Activated CD4-positive, alpha-beta T cell treated with anti-CD3 and anti-CD28 coated beads, Interleukin-2, amount 10 ng/mL, durations not matched to agents 24 days and 14 days (primary cell): ENCODE measurements at regions of chr1 and their contacts with region 1.

Region 1: DNA sequence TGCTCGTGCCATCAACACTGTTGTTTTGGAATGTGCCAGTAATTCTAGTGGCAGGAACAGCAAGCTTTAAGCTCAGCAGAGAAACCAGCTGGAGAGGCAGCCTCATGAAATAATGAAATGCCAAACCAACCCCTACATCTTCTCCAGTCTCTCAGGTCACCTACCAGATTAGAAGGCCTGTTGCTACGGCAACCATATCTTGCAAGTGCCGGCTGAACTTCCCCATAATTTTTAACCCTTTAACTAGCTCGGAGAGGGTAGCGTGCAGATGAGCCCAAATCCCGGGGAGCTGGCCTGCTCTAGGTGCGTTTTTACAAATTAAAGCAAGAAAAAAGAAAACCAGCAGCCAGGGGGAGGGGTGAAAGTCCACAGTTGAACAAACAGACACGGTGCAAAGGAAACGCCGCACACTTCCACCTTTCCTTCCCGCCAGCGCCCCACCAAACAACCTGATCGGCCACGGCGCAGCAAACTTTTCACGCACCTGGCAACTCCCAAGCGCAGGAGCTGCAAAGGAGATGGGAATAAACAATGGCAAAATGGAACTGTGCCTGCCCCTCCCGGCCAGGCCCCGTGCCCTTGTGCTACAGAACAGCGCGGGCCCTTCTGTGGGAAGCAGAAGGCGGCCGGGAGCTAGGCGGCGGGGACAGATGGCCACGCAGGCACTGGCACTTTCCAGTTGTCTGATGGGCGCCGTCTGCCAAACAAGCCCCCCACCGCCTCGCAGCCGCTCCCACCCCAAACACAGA is 50.1 kb downstream of the SSBP3 start:
- DNase-seq: peak; percentile 70
- H3K4me3 Mint-ChIP-seq: peak overlapping the region; percentile 81
- H3K27ac Mint-ChIP-seq: peak overlapping the region; percentile 86
- H3K4me1 Mint-ChIP-seq: peaks cover 78% of the 10 kb centered on the region
- H3K27me3 Mint-ChIP-seq: no peaks in the 10 kb centered on the region

Region 2: DNA sequence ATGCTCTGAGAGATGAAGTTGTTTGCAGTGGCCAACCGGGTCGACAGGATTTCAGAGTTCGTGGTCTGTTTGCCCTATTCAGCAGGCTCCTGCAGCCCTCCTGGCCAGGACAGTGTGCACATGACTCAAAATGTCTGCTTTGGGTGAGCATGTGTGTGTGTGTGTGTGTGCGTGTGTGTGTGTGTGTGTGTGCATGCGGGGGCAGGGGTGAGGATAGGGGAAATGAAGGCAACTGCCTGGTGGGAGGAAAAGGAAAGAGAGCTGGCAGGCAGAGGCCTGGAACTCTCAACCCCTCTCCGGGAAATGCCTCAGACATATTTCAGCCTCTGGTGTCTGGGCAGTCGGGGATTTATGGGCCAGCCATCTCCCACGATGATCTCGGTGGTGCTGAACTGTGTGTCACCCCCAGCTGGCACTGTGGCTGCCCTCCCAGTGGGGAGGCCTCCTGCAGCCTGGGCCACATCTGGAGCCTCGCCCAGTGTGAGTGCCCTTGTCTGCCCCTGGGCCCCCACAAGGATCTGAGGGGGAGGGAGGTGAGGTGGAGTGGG is 218.5 kb before region 1 on chr1:
- intact Hi-C with region 1: no loop called
- DNase-seq: no peak
- H3K4me3 Mint-ChIP-seq: no peak overlapping the region
- H3K27ac Mint-ChIP-seq: no peak overlapping the region
- H3K4me1 Mint-ChIP-seq: no peaks in the 10 kb centered on the region
- H3K27me3 Mint-ChIP-seq: no peaks in the 10 kb centered on the region

Region 3: GRCh38 chr1:54287176-54287650 is 68.9 kb before region 1 on chr1:
- intact Hi-C with region 1: loop called (anchors 1 kb)
- DNase-seq: peak; percentile 94
- H3K4me3 Mint-ChIP-seq: peak overlapping the region; percentile 81
- H3K27ac Mint-ChIP-seq: peak overlapping the region; percentile 97
- H3K4me1 Mint-ChIP-seq: peaks cover 83% of the 10 kb centered on the region
- H3K27me3 Mint-ChIP-seq: no peaks in the 10 kb centered on the region

Region 4: DNA sequence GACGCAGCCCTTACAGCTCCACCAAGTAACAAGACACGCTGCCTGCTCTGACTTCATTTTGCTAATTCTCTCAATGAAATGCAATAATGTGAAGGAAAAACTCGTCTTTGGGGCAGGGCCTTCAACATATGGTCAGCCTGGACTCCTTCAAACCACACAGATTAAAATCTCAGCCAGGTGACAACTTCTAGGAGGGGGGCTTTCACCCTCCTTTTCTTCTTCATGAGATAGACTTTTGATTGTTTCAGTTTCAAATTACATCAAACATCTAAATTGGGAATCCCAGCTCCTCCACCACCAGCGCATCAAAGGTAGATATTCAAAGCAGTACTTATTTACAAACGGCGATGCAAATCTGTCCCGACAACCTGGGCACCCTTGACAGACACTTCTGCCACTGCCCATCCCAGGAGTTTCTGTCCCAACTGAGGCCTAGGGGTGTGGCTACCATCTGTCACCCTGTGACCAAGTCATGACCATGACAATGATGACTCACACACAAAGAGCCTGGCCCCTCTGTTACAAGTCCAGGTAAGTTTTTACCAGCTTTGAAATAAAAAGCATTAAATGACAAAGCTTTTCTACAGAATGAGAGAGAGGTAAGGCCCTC is 20.4 kb after region 1 on chr1:
- intact Hi-C with region 1: loop called (anchors 2 kb)
- DNase-seq: peak; percentile 76
- H3K4me3 Mint-ChIP-seq: no peak overlapping the region
- H3K27ac Mint-ChIP-seq: peak overlapping the region; percentile 63
- H3K4me1 Mint-ChIP-seq: peaks cover 70% of the 10 kb centered on the region
- H3K27me3 Mint-ChIP-seq: no peaks in the 10 kb centered on the region